CD14-positive monocyte (primary cell): ENCODE measurements at regions of chr6 and their contacts with region 1.

Region 1: GRCh38 chr6:166402582-166403277 is 20.0 kb upstream of the MPC1 start:
- DNase-seq: no peak
- H3K4me3 ChIP-seq: no peak overlapping the region
- H3K4me3 Mint-ChIP-seq: no peak overlapping the region
- H3K27ac ChIP-seq: no peak overlapping the region
- H3K27ac Mint-ChIP-seq: no peak overlapping the region
- H3K4me1 ChIP-seq: no peaks in the 10 kb centered on the region
- H3K4me1 Mint-ChIP-seq: peaks cover 3% of the 10 kb centered on the region
- H3K27me3 ChIP-seq: no peaks in the 10 kb centered on the region
- H3K27me3 Mint-ChIP-seq: peaks cover 0 to 3% (median 3%) of the 10 kb centered on the region in 3 donors
- CTCF ChIP-seq: no peak

Region 2: DNA sequence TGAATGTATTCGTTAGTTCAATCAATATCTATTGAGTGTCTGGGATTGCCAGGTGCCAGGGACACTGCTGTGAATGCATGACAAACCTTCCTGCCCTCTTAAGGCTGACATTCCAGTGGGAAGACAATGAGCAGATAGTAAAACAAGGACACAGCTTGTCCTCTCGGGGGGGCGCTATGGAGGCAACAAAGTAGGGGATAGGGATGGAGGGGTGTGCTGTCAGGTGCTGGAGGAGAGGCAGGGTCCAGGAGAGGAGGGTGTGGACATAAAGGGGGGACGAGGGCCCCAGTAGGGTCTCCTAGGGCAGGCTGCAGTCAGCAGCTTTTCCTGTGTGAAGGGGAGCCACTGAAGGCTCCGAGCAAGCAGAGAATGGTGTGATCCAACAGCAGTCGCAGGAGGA is 541.5 kb before region 1 on chr6:
- intact Hi-C with region 1: no loop called
- DNase-seq: no peak
- H3K4me3 ChIP-seq: no peak overlapping the region
- H3K4me3 Mint-ChIP-seq: no peak overlapping the region
- H3K27ac ChIP-seq: no peak overlapping the region
- H3K27ac Mint-ChIP-seq: no peak overlapping the region
- H3K4me1 ChIP-seq: no peaks in the 10 kb centered on the region
- H3K4me1 Mint-ChIP-seq: no peaks in the 10 kb centered on the region
- H3K27me3 ChIP-seq: peaks cover 0 to 5% of the 10 kb centered on the region in 2 donors
- H3K27me3 Mint-ChIP-seq: peaks cover 3 to 15% (median 4%) of the 10 kb centered on the region in 3 donors
- CTCF ChIP-seq: no peak

Region 3: DNA sequence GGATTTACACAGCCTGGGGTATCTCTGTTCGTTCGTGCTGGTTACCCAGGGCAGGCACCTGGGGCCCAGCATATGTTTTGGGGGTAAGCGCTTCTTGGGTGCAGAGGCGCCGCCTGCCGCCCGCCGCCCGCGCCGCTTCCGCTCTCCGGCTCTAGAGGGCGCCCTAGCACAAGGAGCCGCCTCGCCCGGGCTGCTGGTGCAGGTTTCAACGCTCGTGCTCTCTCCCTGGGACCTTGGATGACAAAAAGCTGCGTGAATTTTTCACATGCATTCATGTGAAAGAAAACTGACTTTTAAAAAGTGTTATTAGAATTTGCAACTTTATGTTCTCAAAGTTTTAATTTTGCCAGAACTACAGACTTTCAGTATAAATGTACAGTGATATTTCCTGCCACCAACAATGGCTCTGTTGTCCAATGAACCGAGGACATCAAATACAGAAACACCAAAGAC is 127.0 kb before region 1 on chr6:
- intact Hi-C with region 1: loop called (anchors 1 to 2 kb)
- DNase-seq: peak; percentile 55 to 69 (median 69)
- H3K4me3 ChIP-seq: no peak overlapping the region
- H3K4me3 Mint-ChIP-seq: peak overlapping the region in 1 of 2 donors; percentile 64
- H3K27ac ChIP-seq: no peak overlapping the region
- H3K27ac Mint-ChIP-seq: peak overlapping the region in 1 of 7 donors; percentile 41
- H3K4me1 ChIP-seq: peaks cover 0 to 10% of the 10 kb centered on the region in 2 donors
- H3K4me1 Mint-ChIP-seq: peaks cover 9% of the 10 kb centered on the region
- H3K27me3 ChIP-seq: no peaks in the 10 kb centered on the region
- H3K27me3 Mint-ChIP-seq: peaks cover 3 to 7% (median 5%) of the 10 kb centered on the region in 3 donors
- CTCF ChIP-seq: peak; percentile 100

Region 4: GRCh38 chr6:166313255-166314070 is 89.3 kb before region 1 on chr6:
- intact Hi-C with region 1: loop called in 1 of 2 experiments (anchors 2 kb)
- DNase-seq: peak; percentile 32 to 57 (median 57)
- H3K4me3 ChIP-seq: no peak overlapping the region
- H3K4me3 Mint-ChIP-seq: no peak overlapping the region
- H3K27ac ChIP-seq: no peak overlapping the region
- H3K27ac Mint-ChIP-seq: no peak overlapping the region
- H3K4me1 ChIP-seq: peaks cover 1% of the 10 kb centered on the region in 2 donors
- H3K4me1 Mint-ChIP-seq: peaks cover 3% of the 10 kb centered on the region
- H3K27me3 ChIP-seq: peaks cover 14 to 21% of the 10 kb centered on the region in 2 donors
- H3K27me3 Mint-ChIP-seq: peaks cover 24 to 31% (median 29%) of the 10 kb centered on the region in 3 donors
- CTCF ChIP-seq: peak; percentile 74